Sciatic nerve (tissue), 2 donors: ENCODE measurements at regions of chr11 and their contacts with region 1.

Region 1: GRCh38 chr11:34174412-34175041 is 69.1 kb downstream of the NAT10 start:
- DNase-seq: peak; percentile 94
- ATAC-seq: peak; percentile 98

Region 2: DNA sequence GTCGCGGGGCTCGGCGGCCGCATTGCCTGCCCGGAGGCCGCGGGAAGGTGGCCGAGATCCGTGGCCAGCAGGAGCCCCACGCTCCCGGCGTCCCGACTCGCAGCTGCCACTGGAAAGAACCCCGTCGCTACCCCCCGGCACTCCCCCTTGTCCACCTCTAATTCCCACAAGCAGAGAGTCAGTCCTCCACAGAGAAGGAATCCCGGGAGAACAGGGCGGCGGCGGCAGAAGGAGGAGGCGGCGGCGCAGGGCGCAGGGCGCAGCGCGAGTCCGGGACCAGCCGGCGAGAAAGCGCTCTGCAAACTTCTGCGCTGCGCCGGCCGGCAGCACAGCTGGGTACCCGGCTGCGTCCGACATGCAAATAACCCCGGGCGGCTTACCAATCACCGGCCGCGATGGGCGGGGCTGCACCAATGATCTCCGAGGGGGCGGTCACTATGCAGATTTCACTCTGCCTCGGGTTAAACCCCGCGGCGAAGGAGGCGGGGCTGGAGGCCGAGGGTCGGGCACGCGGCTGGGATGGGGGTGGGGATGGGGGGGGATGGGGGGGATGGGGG is 183.3 kb after region 1 on chr11 and contains the start of gene ABTB2:
- intact Hi-C with region 1: loop called (anchors 2 kb)
- DNase-seq: peak; percentile 99
- ATAC-seq: peak; percentile 97
- total RNA-seq, gene ABTB2: 10.5 TPM